ENCODE measurements at regions of chr17 and their contacts with region 1.

Region 1: GRCh38 chr17:74659898-74660297 is 36.4 kb upstream of the CD300E start:
- DNase-seq: no peak
- CTCF ChIP-seq: no peak

Region 2: DNA sequence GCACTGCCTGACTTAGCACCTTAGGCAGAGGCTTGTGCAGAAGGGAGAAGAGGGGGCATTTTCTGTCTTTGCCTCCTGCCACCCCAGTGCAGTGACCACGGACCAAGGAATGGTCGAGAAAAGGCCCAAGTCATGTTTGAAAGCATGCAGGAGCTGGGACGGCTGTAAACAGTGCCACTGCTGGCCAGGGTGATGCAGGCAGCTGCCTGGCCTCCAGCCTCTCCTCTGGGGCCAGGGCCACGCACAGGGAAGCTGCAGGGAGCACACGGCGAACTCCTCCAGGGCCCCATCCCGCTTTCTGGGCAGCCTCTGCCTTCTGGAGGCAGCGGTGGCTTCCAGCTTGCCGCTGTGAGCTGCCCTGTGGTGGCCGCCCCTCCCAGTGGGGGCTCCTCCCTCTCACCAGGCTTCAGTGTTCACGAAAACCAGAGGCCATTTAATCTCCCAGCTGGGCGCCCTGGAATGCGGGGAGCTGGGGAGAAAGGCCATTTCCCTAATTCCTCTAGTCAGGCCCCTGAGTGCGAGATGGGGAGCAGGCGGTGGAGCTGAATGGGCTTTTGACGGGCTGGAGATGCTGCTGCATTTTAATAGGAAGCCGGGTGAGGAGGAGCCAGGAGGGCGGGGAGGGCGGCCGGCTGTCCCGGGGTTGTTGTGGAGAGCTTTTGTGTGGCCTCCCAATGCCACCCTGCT is 414.6 kb before region 1 on chr17:
- CTCF ChIA-PET with region 1: no interaction called
- POLR2A ChIA-PET with region 1: no interaction called
- DNase-seq: no peak
- CTCF ChIP-seq: no peak

Region 3: DNA sequence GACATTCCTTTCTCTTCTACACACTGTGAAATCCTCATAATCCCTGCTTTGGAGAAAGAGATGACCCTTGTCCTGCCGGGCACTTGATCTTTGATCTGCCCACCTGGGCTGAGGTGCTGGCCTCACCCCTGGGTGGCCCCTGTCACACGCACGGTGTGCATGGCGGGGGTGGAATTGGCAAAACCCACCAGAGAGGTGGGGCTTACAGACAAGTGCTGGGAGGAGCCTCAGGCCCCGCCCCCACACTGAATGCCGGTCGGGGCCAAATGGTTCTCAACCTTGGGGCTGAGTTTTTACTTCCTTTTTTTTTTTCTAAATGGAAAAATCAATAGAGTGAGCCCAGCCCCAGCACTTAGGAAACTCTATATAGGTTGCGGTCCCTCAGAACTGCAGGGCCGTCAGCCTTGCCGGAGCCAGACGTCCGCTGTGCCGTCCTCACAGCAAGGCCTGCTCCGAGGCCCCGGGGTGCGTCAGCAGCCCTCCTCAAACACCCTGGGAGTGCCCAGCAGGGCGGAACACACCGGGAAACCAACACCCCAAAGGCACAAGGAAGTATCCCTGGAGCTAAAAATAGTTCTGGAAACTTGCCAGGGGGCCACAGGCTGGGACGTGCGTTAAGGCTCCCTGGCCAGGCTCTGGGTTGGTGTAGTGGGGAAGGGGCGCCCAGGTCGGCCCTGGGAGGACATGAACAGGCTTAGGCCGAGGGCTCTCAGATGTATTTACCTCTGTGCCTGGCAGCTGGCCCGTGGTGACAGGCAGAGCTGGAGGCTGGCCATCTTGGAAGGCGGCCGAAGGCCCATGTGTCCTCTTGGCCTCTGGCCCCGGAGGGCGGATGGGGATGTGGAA is 217.0 kb before region 1 on chr17:
- CTCF ChIA-PET with region 1: no interaction called
- POLR2A ChIA-PET with region 1: no interaction called
- DNase-seq: peak; percentile 80
- CTCF ChIP-seq: no peak

Region 4: GRCh38 chr17:74566132-74566753 is 93.7 kb before region 1 on chr17:
- CTCF ChIA-PET with region 1: interaction called, 10 read pairs
- POLR2A ChIA-PET with region 1: no interaction called
- DNase-seq: peak; percentile 55
- CTCF ChIP-seq: peak; percentile 58

Region 5: DNA sequence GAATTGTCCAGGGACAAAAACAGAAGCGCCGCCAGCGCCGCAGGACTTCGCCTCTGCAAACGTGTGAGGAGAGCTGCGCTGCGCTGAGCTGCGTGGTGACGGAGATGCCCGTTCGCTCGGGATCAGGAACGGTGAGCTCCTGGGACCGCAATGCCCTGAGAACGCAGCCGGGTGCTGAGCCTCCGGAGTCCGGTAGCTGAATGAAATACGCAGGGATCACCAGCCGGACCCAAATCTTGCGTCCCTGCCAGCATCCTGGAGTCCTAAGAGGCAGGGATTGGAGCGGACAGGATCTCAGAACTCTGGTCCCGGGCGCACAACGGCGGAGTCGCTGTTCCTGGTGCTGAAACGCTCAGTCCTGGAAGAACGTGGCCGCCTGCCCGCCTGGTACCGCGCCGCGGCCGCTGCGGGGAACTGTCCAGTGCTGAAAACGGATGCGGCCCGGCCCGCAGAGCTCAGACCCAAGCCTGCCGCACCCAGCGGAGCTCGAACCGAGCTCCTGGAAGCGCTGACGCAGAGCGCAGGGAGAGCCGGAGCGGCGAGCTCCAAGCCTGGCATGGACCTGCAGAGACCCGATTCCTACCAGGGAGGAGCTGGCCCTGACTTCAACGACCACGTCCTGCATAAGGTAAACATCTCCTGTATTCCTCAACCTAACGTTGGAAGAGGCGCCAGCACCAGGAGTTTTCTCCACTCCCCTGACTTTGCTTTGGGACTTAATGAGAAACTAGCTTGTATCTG is 11.3 kb after region 1 on chr17:
- CTCF ChIA-PET with region 1: interaction called, 46 read pairs
- POLR2A ChIA-PET with region 1: no interaction called
- DNase-seq: peak; percentile 63
- CTCF ChIP-seq: no peak

Region 6: DNA sequence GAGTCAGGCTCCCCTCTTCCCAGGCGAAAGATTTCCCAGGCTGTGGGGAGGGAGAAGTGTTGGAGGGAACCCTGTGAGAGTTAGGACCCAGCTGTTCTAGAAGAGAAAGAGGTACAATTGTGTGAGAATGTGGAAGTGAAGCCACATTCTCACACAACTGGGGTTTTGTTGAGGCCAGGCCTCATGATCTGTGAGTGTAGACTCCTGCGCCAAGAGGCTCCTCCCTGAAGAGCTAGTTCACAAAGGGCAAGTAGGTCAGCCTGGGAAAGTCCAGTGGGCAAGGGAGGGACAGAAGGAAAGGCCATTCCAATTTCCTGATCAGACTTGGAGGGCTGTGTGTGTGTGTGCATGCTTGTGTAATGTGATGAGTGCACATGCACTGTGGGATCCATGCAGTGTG is 37.6 kb after region 1 on chr17:
- CTCF ChIA-PET with region 1: interaction called, 18 read pairs
- POLR2A ChIA-PET with region 1: no interaction called
- DNase-seq: peak; percentile 49
- CTCF ChIP-seq: no peak

Region 7: GRCh38 chr17:74742153-74742515 is 82.2 kb after region 1 on chr17:
- CTCF ChIA-PET with region 1: interaction called, 226 read pairs
- POLR2A ChIA-PET with region 1: interaction called, 3 read pairs
- DNase-seq: peak; percentile 62
- CTCF ChIP-seq: no peak

Region 8: DNA sequence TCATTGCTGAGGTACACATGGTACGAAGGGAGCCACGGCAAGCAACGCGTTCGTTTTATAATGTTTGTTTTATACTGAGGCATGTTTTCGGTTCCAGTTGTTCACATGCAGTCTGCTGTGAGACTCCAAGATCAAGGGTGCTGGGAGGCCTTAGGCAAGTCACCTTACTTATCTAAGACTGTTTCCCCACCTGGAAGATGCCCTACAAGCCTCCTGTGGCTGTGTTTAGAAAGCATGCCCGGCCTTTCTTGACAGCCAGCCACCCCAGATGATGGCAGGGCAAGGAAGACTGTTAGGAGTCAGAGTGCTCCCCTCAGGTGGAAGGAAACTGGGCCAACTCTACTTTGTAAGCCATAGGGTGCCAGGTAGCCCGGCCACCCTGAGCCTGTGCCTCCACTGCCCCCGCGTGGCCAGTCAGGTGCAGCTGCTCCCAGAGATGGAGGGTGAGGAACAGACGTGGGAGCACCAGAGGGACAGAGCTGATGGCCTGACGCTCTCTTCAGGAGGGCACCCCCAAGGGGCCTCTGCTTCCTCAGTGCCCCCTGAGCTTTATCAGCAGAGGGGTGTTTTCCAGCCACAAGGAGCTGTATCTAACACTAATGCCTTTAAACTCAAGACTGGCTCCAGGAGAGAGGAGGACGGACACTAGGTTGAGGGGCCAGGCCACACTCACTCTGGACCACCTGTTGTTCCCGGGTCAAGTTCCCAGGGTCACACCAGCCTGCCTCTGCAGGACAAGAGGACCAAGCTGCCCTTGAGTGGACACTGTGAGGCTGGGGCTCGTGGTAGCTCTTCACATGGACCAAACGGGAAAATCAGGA is 110.8 kb after region 1 on chr17:
- CTCF ChIA-PET with region 1: interaction called, 69 read pairs
- POLR2A ChIA-PET with region 1: no interaction called
- DNase-seq: peak; percentile 75
- CTCF ChIP-seq: peak; percentile 95

Region 9: GRCh38 chr17:74864866-74865395 is 205.0 kb after region 1 on chr17:
- CTCF ChIA-PET with region 1: interaction called, 10 read pairs
- POLR2A ChIA-PET with region 1: no interaction called
- DNase-seq: peak; percentile 85
- CTCF ChIP-seq: peak; percentile 93

Measured in GM10248 (cell line).